ENCODE measurements at regions of chr14 and their contacts with region 1.

Region 1: GRCh38 chr14:80658733-80659132 is 282.8 kb downstream of the CEP128 start:
- DNase-seq: no peak
- H3K4me3 ChIP-seq: peak overlapping the region in 6 of 59 donors; percentile 11 to 27 (median 18)
- H3K27ac ChIP-seq: peak overlapping the region in 52 of 59 donors; percentile 10 to 86 (median 67)
- H3K27me3 ChIP-seq: no peaks in the 10 kb centered on the region
- CTCF ChIP-seq: peak in 2 of 56 donors; percentile 16 to 18

Region 2: DNA sequence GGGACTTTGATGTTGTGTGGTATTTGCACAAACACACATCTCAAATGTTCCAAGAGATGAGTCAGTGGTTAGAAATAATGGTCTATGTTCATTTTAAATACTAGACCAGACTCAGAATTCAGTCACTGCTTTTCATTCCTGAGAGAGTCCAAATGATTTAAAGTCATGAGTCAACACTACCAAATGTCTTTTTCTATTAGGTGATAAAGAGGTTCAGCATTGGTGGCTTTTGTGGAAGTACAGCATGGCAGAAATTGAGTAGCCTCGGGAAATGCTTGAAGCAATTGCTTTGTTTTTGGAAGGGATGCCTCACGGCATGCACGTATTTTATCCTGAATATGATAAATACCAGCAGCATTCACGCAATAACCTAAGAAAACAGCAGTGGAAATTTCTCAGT is 563.1 kb before region 1 on chr14:
- intact Hi-C with region 1: no loop called
- DNase-seq: no peak
- H3K4me3 ChIP-seq: no peak overlapping the region
- H3K27ac ChIP-seq: no peak overlapping the region
- H3K27me3 ChIP-seq: no peaks in the 10 kb centered on the region
- CTCF ChIP-seq: no peak

Region 3: GRCh38 chr14:80607430-80608190 is 51.1 kb before region 1 on chr14:
- intact Hi-C with region 1: loop called in 1 of 2 experiments (anchors 10 kb)
- DNase-seq: no peak
- H3K4me3 ChIP-seq: no peak overlapping the region
- H3K27ac ChIP-seq: no peak overlapping the region
- H3K27me3 ChIP-seq: no peaks in the 10 kb centered on the region
- CTCF ChIP-seq: no peak